CD4-positive, alpha-beta T cell (primary cell): ENCODE measurements at regions of chr11 and their contacts with region 1.

Region 1: DNA sequence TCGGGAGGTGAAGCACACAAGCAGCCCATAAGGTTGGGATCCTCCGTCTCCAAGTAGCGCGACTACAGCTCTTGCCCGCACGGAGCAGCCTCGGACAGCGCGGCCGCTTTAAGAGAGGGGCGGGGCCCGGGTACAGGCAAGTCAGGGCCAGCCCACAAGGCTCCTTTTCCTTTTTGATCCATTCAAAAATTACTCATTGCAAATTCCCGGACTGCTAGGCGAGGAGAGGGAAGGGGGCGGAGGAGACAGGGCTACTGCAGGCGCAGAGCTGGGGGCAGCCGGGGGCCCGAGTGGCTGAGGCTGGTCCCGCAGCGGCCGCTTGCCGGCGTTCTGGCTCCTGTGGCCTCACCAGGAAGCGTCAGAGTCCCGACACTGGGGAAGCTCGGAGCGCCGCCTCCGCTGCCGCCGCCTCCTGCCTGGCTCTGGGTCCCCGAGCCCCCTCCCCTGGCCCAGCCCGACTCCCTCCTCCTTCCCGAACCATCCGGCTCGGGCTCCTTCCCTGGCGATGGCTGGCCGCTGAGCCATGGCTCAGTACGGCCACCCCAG is at the start of gene UBASH3B:
- DNase-seq: peak; percentile 34 to 79 (median 54)
- ATAC-seq: peak; percentile 67
- H3K4me3 ChIP-seq: peak within 1 kb of the TSS; percentile 89
- H3K4me3 Mint-ChIP-seq: peak within 1 kb of the TSS; percentile 100
- H3K27ac ChIP-seq: peak within 1 kb of the TSS; percentile 46 to 61
- H3K27ac Mint-ChIP-seq: peak within 1 kb of the TSS; percentile 91
- H3K4me1 ChIP-seq: peaks cover 48% of the 10 kb centered on the region
- H3K4me1 Mint-ChIP-seq: peaks cover 51% of the 10 kb centered on the region
- H3K27me3 ChIP-seq: no peaks in the 10 kb centered on the region
- H3K27me3 Mint-ChIP-seq: no peaks in the 10 kb centered on the region
- CTCF ChIP-seq: peak; percentile 15
- total RNA-seq, gene UBASH3B: 24.5 to 28.6 TPM

Region 2: DNA sequence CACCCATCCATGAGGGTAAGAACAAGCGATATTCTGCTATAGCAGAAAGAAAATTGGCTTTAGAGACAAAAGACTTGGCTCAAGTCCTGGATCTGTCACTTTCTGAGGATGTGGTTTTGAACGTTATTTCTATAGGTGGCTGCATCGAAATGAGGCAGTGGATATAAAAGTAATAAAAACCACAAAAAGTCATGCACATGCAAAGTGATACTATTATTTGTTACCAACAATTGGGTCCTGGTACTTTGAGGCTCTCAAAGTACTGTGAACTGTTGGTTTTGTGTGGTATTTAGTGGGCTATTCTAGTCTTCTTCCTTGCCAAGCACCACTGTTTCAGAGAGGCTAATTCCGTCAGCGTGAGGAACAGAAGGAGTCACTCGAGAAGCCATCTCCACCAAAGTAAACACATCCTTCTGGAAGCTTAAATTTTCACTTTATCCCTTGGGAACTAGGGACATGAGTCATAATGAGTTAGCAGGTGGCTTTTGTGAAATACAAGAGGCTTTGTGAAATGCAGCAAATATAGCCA is 13.0 kb after region 1 on chr11:
- CTCF ChIA-PET with region 1: interaction called, 12 read pairs
- POLR2A ChIA-PET with region 1: interaction called, 44 read pairs
- intact Hi-C with region 1: loop called in 1 of 2 experiments (anchors 2 kb)
- DNase-seq: peak in 3 of 14 experiments; percentile 47 to 80 (median 47)
- ATAC-seq: peak; percentile 70
- H3K4me3 ChIP-seq: no peak overlapping the region
- H3K4me3 Mint-ChIP-seq: peak overlapping the region; percentile 80
- H3K27ac ChIP-seq: peak overlapping the region in 1 of 2 donors; percentile 59
- H3K27ac Mint-ChIP-seq: peak overlapping the region; percentile 73
- H3K4me1 ChIP-seq: peaks cover 97% of the 10 kb centered on the region
- H3K4me1 Mint-ChIP-seq: peaks cover 73% of the 10 kb centered on the region
- H3K27me3 ChIP-seq: no peaks in the 10 kb centered on the region
- H3K27me3 Mint-ChIP-seq: no peaks in the 10 kb centered on the region
- CTCF ChIP-seq: no peak

Region 3: GRCh38 chr11:122690801-122691548 is 35.4 kb after region 1 on chr11:
- CTCF ChIA-PET with region 1: interaction called, 12 read pairs
- POLR2A ChIA-PET with region 1: interaction called, 70 read pairs
- intact Hi-C with region 1: loop called in 1 of 2 experiments (anchors 5 kb)
- DNase-seq: peak in 4 of 14 experiments; percentile 23 to 45 (median 40)
- ATAC-seq: peak; percentile 68
- H3K4me3 ChIP-seq: peak overlapping the region; percentile 34
- H3K4me3 Mint-ChIP-seq: peak overlapping the region; percentile 84
- H3K27ac ChIP-seq: peak overlapping the region; percentile 46 to 71
- H3K27ac Mint-ChIP-seq: peak overlapping the region; percentile 87
- H3K4me1 ChIP-seq: peaks cover 76% of the 10 kb centered on the region
- H3K4me1 Mint-ChIP-seq: peaks cover 84% of the 10 kb centered on the region
- H3K27me3 ChIP-seq: no peaks in the 10 kb centered on the region
- H3K27me3 Mint-ChIP-seq: no peaks in the 10 kb centered on the region
- CTCF ChIP-seq: no peak

Region 4: GRCh38 chr11:122717264-122717867 is 61.8 kb after region 1 on chr11:
- CTCF ChIA-PET with region 1: interaction called, 11 read pairs
- POLR2A ChIA-PET with region 1: interaction called, 9 read pairs
- intact Hi-C with region 1: no loop called
- DNase-seq: peak in 4 of 14 experiments; percentile 29 to 71 (median 40)
- ATAC-seq: no peak
- H3K4me3 ChIP-seq: no peak overlapping the region
- H3K4me3 Mint-ChIP-seq: no peak overlapping the region
- H3K27ac ChIP-seq: peak overlapping the region in 1 of 2 donors; percentile 3
- H3K27ac Mint-ChIP-seq: peak overlapping the region; percentile 42
- H3K4me1 ChIP-seq: peaks cover 51% of the 10 kb centered on the region
- H3K4me1 Mint-ChIP-seq: peaks cover 66% of the 10 kb centered on the region
- H3K27me3 ChIP-seq: no peaks in the 10 kb centered on the region
- H3K27me3 Mint-ChIP-seq: no peaks in the 10 kb centered on the region
- CTCF ChIP-seq: no peak

Region 5: DNA sequence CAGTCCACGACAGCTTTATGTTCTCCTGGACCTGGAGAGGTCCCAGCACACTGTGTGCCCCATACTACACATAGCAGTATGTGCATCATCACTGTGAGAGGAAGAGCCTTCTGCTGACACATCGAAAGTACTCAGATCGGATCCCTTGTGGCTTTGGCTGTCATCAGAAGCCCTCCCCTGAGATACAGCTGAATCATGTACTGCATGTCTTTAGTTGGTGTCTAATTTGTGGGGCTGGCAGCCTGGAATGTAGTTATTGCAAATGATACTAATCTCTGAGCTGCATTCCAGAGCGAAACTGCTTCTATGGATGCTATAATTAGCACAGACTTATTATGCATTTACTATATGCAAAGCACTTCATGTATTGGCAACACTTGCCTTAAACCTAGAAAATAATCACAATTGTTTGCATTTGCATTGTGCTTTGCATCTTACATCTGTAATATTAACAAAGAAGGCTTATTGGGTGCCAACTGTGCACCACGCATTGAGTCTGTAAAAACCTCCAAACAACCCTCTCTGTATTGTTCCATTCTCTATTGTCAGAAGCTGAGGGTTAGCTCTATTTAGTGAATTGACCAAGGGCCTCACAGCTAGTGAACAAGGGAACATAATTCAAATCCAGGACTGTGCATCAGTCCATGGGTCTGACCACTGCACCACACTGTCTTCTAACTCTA is 93.5 kb after region 1 on chr11:
- CTCF ChIA-PET with region 1: interaction called, 28 read pairs
- POLR2A ChIA-PET with region 1: interaction called, 61 read pairs
- intact Hi-C with region 1: loop called (anchors 1 to 2 kb)
- DNase-seq: peak in 13 of 14 experiments; percentile 11 to 80 (median 37)
- ATAC-seq: peak; percentile 42
- H3K4me3 ChIP-seq: no peak overlapping the region
- H3K4me3 Mint-ChIP-seq: no peak overlapping the region
- H3K27ac ChIP-seq: no peak overlapping the region
- H3K27ac Mint-ChIP-seq: no peak overlapping the region
- H3K4me1 ChIP-seq: peaks cover 68% of the 10 kb centered on the region
- H3K4me1 Mint-ChIP-seq: peaks cover 41% of the 10 kb centered on the region
- H3K27me3 ChIP-seq: no peaks in the 10 kb centered on the region
- H3K27me3 Mint-ChIP-seq: no peaks in the 10 kb centered on the region
- CTCF ChIP-seq: no peak

Region 6: GRCh38 chr11:123054301-123055065 is 398.9 kb after region 1 on chr11:
- CTCF ChIA-PET with region 1: no interaction called
- POLR2A ChIA-PET with region 1: interaction called, 3 read pairs
- intact Hi-C with region 1: loop called in 1 of 2 experiments (anchors 10 kb)
- DNase-seq: peak in 4 of 14 experiments; percentile 39 to 83 (median 80)
- ATAC-seq: peak; percentile 87
- H3K4me3 ChIP-seq: no peak overlapping the region
- H3K4me3 Mint-ChIP-seq: peak overlapping the region; percentile 73
- H3K27ac ChIP-seq: peak overlapping the region in 1 of 2 donors; percentile 11
- H3K27ac Mint-ChIP-seq: peak overlapping the region; percentile 98
- H3K4me1 ChIP-seq: peaks cover 52% of the 10 kb centered on the region
- H3K4me1 Mint-ChIP-seq: peaks cover 55% of the 10 kb centered on the region
- H3K27me3 ChIP-seq: no peaks in the 10 kb centered on the region
- H3K27me3 Mint-ChIP-seq: no peaks in the 10 kb centered on the region
- CTCF ChIP-seq: peak; percentile 69